ENCODE measurements at regions of chr15 and their contacts with region 1.

Region 1: DNA sequence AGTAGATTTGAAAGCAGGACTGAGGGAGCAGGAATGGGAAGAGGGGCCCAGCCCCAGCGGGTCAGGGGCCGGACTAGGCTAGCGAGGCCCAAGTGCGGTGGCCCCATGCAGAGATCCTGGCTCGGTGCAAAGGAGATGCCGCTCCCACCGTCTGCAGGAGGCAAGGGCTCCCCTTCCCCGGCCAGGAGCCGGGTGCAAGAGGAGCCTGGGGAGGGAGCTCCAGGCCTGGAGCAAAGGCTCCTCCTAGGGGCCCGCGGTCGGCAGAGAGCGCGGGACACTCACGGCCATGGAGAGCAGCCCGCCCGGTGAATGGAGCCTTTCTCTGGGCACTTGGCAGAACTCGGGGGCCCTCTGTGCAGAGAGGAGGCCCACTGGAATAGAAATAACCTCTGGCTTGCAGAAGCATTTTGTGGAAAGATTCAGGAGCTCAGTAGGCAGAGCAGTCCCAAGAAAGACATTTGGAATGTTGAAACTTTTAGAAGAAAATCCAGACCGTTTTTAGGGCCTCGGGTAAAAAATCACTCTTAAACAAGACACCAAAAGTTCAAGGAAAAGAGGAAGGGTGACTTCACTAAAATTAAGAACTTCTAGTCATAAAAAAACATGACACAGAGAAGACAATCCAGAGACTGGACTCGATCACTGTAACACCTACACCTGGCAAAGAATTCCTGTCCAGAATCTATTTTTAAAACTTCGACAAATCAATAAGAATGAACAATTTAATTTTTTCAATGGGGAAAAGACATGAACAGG is 43.0 kb upstream of the USP3 start:
- DNase-seq: no peak
- ATAC-seq: no peak
- H3K4me3 ChIP-seq: no peak overlapping the region
- H3K27ac ChIP-seq: peak overlapping the region; percentile 59
- H3K4me1 ChIP-seq: peaks cover 22% of the 10 kb centered on the region
- H3K27me3 ChIP-seq: no peaks in the 10 kb centered on the region
- CTCF ChIP-seq: no peak

Region 2: GRCh38 chr15:63238796-63239195 is 222.6 kb before region 1 on chr15:
- CTCF ChIA-PET with region 1: no interaction called
- POLR2A ChIA-PET with region 1: no interaction called
- intact Hi-C with region 1: no loop called
- DNase-seq: peak; percentile 6
- ATAC-seq: no peak
- H3K4me3 ChIP-seq: no peak overlapping the region
- H3K27ac ChIP-seq: no peak overlapping the region
- H3K4me1 ChIP-seq: peaks cover 38% of the 10 kb centered on the region
- H3K27me3 ChIP-seq: no peaks in the 10 kb centered on the region
- CTCF ChIP-seq: no peak

Region 3: DNA sequence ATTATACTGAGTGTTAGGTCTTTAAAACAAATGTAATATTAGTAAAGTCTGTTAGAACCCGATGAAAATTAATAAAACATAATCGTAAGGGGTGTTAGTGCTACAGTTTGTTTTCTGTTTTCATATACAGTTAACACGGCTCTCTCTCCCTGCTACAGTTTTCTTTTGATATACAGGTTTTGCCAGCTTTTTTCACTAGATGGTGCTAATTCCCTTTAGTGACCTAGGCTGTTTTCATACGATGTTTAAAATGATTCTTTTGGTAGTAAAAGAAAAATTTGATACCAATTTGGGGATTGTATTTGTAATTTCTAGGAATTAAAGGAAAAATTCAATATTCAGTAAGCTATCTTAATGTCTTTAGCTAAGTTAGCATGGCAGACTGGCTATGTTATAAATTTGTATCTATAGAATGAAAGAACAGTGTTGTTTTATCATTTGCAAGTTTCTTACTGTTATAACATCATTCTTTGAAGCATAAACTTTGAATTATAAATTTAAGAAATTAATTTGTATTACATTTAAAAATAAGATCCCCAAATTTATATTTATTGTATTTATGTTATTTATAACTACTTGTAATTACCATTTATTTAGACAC is 172.5 kb before region 1 on chr15:
- CTCF ChIA-PET with region 1: no interaction called
- POLR2A ChIA-PET with region 1: no interaction called
- intact Hi-C with region 1: loop called (anchors 5 kb)
- DNase-seq: peak; percentile 69
- ATAC-seq: no peak
- H3K4me3 ChIP-seq: no peak overlapping the region
- H3K27ac ChIP-seq: no peak overlapping the region
- H3K4me1 ChIP-seq: peaks cover 5% of the 10 kb centered on the region; the same call in 1 of the 2 replicates
- H3K27me3 ChIP-seq: no peaks in the 10 kb centered on the region
- CTCF ChIP-seq: peak; percentile 82

Region 4: GRCh38 chr15:63306492-63307073 is 154.8 kb before region 1 on chr15:
- CTCF ChIA-PET with region 1: no interaction called
- POLR2A ChIA-PET with region 1: no interaction called
- intact Hi-C with region 1: no loop called
- DNase-seq: no peak
- ATAC-seq: no peak
- H3K4me3 ChIP-seq: no peak overlapping the region
- H3K27ac ChIP-seq: no peak overlapping the region
- H3K4me1 ChIP-seq: no peaks in the 10 kb centered on the region
- H3K27me3 ChIP-seq: no peaks in the 10 kb centered on the region
- CTCF ChIP-seq: no peak

Region 5: GRCh38 chr15:63519548-63520178 is 58.3 kb after region 1 on chr15:
- CTCF ChIA-PET with region 1: no interaction called
- POLR2A ChIA-PET with region 1: interaction called, 20 read pairs
- intact Hi-C with region 1: no loop called
- DNase-seq: no peak
- ATAC-seq: no peak
- H3K4me3 ChIP-seq: no peak overlapping the region
- H3K27ac ChIP-seq: no peak overlapping the region
- H3K4me1 ChIP-seq: peaks cover 37% of the 10 kb centered on the region
- H3K27me3 ChIP-seq: no peaks in the 10 kb centered on the region
- CTCF ChIP-seq: no peak

Region 6: DNA sequence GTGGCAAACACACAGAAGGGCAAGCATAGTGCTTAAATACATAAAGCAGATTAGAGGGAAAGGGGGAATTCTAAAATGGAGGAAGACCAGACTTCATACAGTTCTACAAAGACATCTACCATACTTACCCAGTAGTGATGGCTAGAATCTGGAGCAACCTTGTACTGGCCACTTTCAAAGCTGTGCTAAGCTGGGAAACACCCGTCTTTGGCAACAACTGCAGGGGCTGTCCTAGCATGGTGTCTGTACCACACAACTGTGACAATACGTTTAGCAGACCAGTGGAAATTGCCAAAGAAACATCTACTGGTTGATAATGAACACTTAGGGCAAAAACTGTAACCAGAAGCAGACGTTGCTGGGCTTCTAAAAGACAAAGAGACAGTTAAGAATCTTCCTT is 232.8 kb after region 1 on chr15:
- CTCF ChIA-PET with region 1: no interaction called
- POLR2A ChIA-PET with region 1: no interaction called
- intact Hi-C with region 1: no loop called
- DNase-seq: no peak
- ATAC-seq: no peak
- H3K4me3 ChIP-seq: no peak overlapping the region
- H3K27ac ChIP-seq: no peak overlapping the region
- H3K4me1 ChIP-seq: no peaks in the 10 kb centered on the region
- H3K27me3 ChIP-seq: no peaks in the 10 kb centered on the region
- CTCF ChIP-seq: no peak